Colonic mucosa (tissue), 4 donors: ENCODE measurements at regions of chr14 and their contacts with region 1.

Region 1: DNA sequence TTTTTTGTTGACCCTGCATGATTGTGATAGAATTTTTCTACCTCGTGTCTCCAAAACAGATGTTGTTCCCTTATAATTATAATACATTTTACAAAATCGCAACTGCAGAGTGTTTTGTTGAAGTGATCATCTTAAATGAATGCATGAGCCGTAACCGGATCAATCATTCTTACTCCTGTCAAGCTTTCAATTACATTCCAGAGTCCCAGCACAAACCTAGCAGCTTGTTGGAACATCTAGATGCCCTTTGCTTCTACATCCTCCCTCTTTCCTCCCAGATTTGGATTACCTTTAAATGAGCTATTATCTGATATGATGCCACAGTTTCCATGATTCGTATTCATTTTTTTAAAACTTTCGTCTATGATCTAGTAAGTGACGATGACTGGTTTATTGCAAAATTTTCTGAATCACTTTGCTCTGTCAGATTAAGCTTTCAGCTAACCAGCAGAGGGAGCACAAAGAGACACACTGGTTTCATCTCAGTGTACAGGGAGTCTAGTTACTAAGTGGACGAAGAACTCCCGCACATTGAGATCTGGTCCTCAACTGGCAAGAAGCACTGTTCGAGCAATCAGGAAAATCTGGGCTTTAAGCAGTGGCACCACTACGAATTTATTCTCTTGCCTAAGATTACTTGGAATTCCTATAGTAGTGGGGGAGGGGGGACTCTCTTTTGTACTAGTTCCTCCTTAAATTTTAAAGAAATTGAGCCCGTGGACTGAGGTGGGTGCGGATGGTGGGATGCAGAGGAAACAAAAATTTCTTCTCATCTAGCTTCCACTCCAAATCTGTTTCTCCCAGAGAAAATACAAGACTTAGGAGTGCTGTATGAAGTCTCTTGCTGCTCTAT is 40.9 kb downstream of the TSHR start:
- DNase-seq: peak; percentile 24
- H3K4me3 ChIP-seq: no peak overlapping the region
- H3K27ac ChIP-seq: no peak overlapping the region
- H3K4me1 ChIP-seq: no peaks in the 10 kb centered on the region
- H3K27me3 ChIP-seq: no peaks in the 10 kb centered on the region
- CTCF ChIP-seq: peak; percentile 29

Region 2: DNA sequence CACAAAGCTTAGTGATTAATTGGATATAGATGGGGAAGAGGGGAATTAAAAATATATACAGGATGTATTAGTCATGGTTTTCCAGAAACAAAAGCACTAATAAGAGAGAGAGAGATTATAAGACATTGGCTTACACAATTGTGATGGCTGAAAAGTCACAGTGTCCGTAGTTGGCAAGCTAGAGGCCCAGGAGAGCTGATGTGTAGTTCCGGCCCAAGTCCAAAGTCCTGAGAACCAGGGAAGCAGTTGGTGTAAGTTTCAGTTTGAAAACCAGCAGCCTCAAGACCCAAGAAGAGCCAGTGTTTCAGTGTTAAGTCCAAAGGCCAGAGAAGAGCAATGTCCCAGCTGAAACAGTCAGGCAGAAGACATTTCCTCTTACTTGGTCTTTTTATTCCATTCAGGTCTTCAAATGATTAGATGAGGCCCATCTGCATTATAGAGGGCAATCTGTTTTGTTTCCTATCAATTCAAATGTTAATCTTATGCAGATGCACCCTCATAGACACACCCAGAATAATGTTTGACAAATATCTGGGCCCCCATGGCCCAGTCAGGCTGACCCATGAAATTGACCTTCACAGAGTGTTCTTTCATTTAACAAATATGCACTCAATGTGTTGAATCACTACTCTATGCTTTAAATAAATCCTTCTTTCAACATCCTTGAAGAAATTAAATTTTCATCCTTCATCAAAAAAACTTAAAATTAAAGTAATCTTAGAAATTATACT is 717.8 kb before region 1 on chr14:
- intact Hi-C with region 1: no loop called
- DNase-seq: no peak
- H3K4me3 ChIP-seq: no peak overlapping the region
- H3K27ac ChIP-seq: no peak overlapping the region
- H3K4me1 ChIP-seq: no peaks in the 10 kb centered on the region
- H3K27me3 ChIP-seq: no peaks in the 10 kb centered on the region
- CTCF ChIP-seq: no peak

Region 3: GRCh38 chr14:81464247-81465002 is 468.1 kb after region 1 on chr14:
- intact Hi-C with region 1: loop called (anchors 5 kb)
- DNase-seq: peak; percentile 75
- H3K4me3 ChIP-seq: peak overlapping the region; percentile 15
- H3K27ac ChIP-seq: peak overlapping the region; percentile 8
- H3K4me1 ChIP-seq: no peaks in the 10 kb centered on the region
- H3K27me3 ChIP-seq: no peaks in the 10 kb centered on the region
- CTCF ChIP-seq: peak; percentile 81